ENCODE measurements at regions of chr3 and their contacts with region 1.

Region 1: GRCh38 chr3:16543242-16543864 is 29.9 kb upstream of the RFTN1 start:
- DNase-seq: no peak
- ATAC-seq: no peak
- H3K4me3 ChIP-seq: no peak overlapping the region
- H3K4me3 Mint-ChIP-seq: peak overlapping the region; percentile 17
- H3K27ac ChIP-seq: no peak overlapping the region
- H3K27ac Mint-ChIP-seq: peak overlapping the region; percentile 78 to 88
- H3K4me1 ChIP-seq: peaks cover 42% of the 10 kb centered on the region
- H3K4me1 Mint-ChIP-seq: peaks cover 55 to 63% of the 10 kb centered on the region in 2 donors
- H3K27me3 ChIP-seq: no peaks in the 10 kb centered on the region
- H3K27me3 Mint-ChIP-seq: peaks cover 0 to 2% of the 10 kb centered on the region in 2 donors
- CTCF ChIP-seq: no peak

Region 2: GRCh38 chr3:16516695-16517481 is 26.5 kb before region 1 on chr3:
- intact Hi-C with region 1: loop called (anchors 1 kb)
- DNase-seq: peak; percentile 47 to 50
- ATAC-seq: peak; percentile 7 to 28 (median 19)
- H3K4me3 ChIP-seq: no peak overlapping the region
- H3K4me3 Mint-ChIP-seq: peak overlapping the region; percentile 97
- H3K27ac ChIP-seq: peak overlapping the region; percentile 80
- H3K27ac Mint-ChIP-seq: peak overlapping the region; percentile 91 to 97
- H3K4me1 ChIP-seq: peaks cover 54% of the 10 kb centered on the region
- H3K4me1 Mint-ChIP-seq: peaks cover 75 to 81% of the 10 kb centered on the region in 2 donors
- H3K27me3 ChIP-seq: no peaks in the 10 kb centered on the region
- H3K27me3 Mint-ChIP-seq: no peaks in the 10 kb centered on the region
- CTCF ChIP-seq: no peak

Region 3: GRCh38 chr3:16741103-16741758 is 197.9 kb after region 1 on chr3:
- intact Hi-C with region 1: no loop called
- DNase-seq: no peak
- ATAC-seq: no peak
- H3K4me3 ChIP-seq: no peak overlapping the region
- H3K4me3 Mint-ChIP-seq: no peak overlapping the region
- H3K27ac ChIP-seq: no peak overlapping the region
- H3K27ac Mint-ChIP-seq: no peak overlapping the region
- H3K4me1 ChIP-seq: no peaks in the 10 kb centered on the region
- H3K4me1 Mint-ChIP-seq: peaks cover 0 to 5% of the 10 kb centered on the region in 2 donors
- H3K27me3 ChIP-seq: peaks cover 2% of the 10 kb centered on the region
- H3K27me3 Mint-ChIP-seq: peaks cover 0 to 7% of the 10 kb centered on the region in 2 donors
- CTCF ChIP-seq: no peak

Region 4: DNA sequence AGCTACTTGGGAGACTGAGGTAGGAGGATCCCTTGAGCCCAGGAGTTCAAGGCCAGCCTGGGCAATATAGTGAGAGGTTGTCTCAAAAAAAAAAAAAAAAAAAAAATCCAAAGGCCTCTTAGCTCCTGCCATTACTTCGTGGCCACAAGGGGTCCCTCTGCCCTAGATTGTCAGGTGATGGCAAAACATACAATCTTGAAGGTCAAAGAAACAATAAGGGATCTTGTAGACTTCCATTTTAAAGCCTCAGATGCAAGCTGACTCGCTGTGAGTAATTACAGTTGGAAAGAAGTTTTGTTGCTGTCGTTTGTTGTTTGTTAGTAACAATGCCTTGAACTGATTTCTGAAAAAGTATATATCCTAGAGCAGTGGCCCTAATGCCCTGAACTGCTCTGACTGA is 285.5 kb after region 1 on chr3:
- intact Hi-C with region 1: no loop called
- DNase-seq: peak; percentile 22 to 81
- ATAC-seq: peak; percentile 64 to 81 (median 68)
- H3K4me3 ChIP-seq: no peak overlapping the region
- H3K4me3 Mint-ChIP-seq: no peak overlapping the region
- H3K27ac ChIP-seq: no peak overlapping the region
- H3K27ac Mint-ChIP-seq: no peak overlapping the region
- H3K4me1 ChIP-seq: peaks cover 14% of the 10 kb centered on the region
- H3K4me1 Mint-ChIP-seq: peaks cover 11 to 15% of the 10 kb centered on the region in 2 donors
- H3K27me3 ChIP-seq: no peaks in the 10 kb centered on the region
- H3K27me3 Mint-ChIP-seq: peaks cover 3 to 9% of the 10 kb centered on the region in 2 donors
- CTCF ChIP-seq: peak; percentile 27

Measured in natural killer cell (primary cell).